ENCODE measurements at regions of chr18 and their contacts with region 1.

Region 1: DNA sequence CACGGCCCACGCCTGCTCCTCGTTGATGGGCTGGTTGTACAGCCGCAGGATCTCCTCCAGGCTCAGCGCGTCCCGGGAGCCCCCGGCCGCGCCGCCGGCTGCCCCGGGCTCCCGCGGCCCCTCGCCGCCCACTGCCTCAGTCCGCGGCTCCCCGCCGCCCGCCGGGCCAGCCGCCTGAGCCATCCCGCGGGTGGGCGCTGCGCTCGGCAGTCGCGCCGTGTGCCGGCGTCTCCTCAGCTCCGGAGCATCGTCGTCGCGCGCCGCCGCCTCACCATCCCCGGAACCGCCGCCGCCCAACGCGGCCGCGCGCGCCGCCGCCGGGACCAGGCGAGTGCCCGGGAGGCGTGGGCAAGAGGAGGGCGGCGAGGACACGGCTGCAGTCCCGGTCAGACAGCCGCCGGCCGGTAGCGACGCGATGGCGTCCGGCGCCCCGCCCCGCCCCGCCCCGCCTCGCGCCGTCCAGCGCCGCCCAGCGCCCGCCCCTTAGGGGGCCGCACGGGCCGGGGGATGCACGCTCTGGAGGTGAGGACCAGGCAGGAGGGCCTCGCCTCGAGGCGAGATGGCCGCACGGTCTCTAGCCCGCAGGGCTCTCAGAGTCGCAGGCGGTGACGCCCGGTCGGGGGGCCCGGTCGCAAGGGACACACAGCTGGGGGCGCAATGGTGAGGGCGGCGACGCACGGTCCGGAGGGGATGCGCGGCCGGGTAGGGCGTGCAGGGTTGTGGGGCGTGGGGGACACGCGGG is at the start of gene SPIRE1:
- DNase-seq: peak; percentile 86
- H3K4me3 ChIP-seq: peak within 1 kb of the TSS; percentile 72 to 92 (median 82)
- H3K27ac ChIP-seq: peak within 1 kb of the TSS; percentile 98
- H3K4me1 ChIP-seq: peaks cover 0 to 25% (median 12%) of the 10 kb centered on the region in 4 donors
- H3K27me3 ChIP-seq: no peaks in the 10 kb centered on the region
- CTCF ChIP-seq: no peak
- EP300 ChIP-seq: no peak
- POLR2A ChIP-seq: no peak
- total RNA-seq, gene SPIRE1: 22.7 to 31.6 (median 24.8) TPM

Region 2: DNA sequence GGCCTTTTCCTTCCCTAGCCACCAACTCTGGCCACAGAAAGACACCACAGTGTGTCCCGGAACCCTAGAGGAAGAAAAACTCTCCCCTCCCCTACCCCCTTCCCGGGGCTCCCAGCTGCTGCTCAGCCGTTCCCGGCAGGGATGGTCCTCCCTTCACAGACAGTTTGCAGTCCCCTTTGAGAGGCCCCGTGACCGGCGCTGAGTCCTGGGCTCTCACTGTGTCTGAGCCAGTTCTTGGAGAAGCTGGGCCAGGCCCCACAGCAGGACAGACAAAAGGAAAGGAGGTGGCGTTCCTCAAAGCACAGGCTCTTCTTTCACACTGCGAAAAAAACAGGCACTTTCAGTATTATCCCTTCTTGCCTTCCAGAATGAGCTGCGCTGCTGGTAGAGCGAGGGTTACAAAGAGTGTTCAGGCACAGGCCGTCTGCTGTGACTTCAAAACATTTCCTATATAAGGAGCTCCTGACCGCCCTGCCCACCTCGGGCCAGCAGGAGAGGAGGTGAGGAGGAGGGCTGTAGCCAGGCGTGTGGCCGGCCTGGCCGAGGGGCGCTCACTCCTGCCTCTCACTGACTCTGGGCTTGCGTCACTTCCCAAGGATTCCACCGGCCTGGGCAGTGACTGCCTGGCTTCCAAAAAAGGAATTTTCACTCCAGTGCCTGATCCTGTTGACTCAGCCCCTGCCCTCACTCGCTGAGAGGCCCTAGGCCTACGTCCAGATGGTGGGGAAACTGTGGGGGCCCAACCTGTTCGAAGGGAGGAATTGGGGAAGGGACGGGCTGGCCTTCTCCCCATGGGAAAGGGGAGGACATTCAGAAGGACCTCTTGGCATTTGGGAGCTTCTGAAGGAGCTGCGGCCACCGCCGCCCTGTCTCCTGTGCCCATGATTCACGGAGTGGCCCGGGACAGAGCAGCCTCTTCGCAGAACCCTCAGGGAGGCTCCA is 378.8 kb before region 1 on chr18:
- intact Hi-C with region 1: loop called (anchors 5 kb)
- DNase-seq: peak; percentile 98
- H3K4me3 ChIP-seq: peak overlapping the region; percentile 42 to 56 (median 50)
- H3K27ac ChIP-seq: peak overlapping the region; percentile 92 to 99 (median 96)
- H3K4me1 ChIP-seq: peaks cover 0 to 58% (median 52%) of the 10 kb centered on the region in 4 donors
- H3K27me3 ChIP-seq: no peaks in the 10 kb centered on the region
- CTCF ChIP-seq: peak in 3 of 4 experiments; percentile 7 to 20 (median 17)
- EP300 ChIP-seq: peak in 3 of 4 donors; percentile 49 to 93 (median 67)
- POLR2A ChIP-seq: peak; percentile 80 to 87

Region 3: GRCh38 chr18:12391618-12392165 is 266.2 kb before region 1 on chr18:
- intact Hi-C with region 1: loop called (anchors 1 kb)
- DNase-seq: peak; percentile 75
- H3K4me3 ChIP-seq: no peak overlapping the region
- H3K27ac ChIP-seq: no peak overlapping the region
- H3K4me1 ChIP-seq: no peaks in the 10 kb centered on the region
- H3K27me3 ChIP-seq: no peaks in the 10 kb centered on the region
- CTCF ChIP-seq: peak; percentile 71 to 95 (median 80)
- EP300 ChIP-seq: no peak
- POLR2A ChIP-seq: no peak

Region 4: GRCh38 chr18:12408247-12408869 is 249.5 kb before region 1 on chr18:
- intact Hi-C with region 1: loop called (anchors 5 kb)
- DNase-seq: no peak
- H3K4me3 ChIP-seq: peak overlapping the region; percentile 49 to 71 (median 64)
- H3K27ac ChIP-seq: peak overlapping the region; percentile 86 to 93 (median 92)
- H3K4me1 ChIP-seq: peaks cover 0 to 28% (median 16%) of the 10 kb centered on the region in 4 donors
- H3K27me3 ChIP-seq: no peaks in the 10 kb centered on the region
- CTCF ChIP-seq: no peak
- EP300 ChIP-seq: no peak
- POLR2A ChIP-seq: no peak

Region 5: GRCh38 chr18:12883684-12884405 is 226.0 kb after region 1 on chr18 and contains the start of gene PTPN2:
- intact Hi-C with region 1: loop called (anchors 5 kb)
- DNase-seq: peak; percentile 98
- H3K4me3 ChIP-seq: peak within 1 kb of the TSS; percentile 68 to 87 (median 77)
- H3K27ac ChIP-seq: peak within 1 kb of the TSS; percentile 95 to 100 (median 98)
- H3K4me1 ChIP-seq: peaks cover 0 to 26% (median 15%) of the 10 kb centered on the region in 4 donors
- H3K27me3 ChIP-seq: no peaks in the 10 kb centered on the region
- CTCF ChIP-seq: no peak
- EP300 ChIP-seq: peak in 1 of 4 donors; percentile 9
- POLR2A ChIP-seq: peak; percentile 82 to 85
- total RNA-seq, gene PTPN2: 20.0 to 31.0 (median 21.0) TPM

Region 6: GRCh38 chr18:13221869-13222855 is 564.3 kb after region 1 on chr18:
- intact Hi-C with region 1: no loop called
- DNase-seq: peak; percentile 95
- H3K4me3 ChIP-seq: peak overlapping the region in 1 of 4 donors; percentile 9
- H3K27ac ChIP-seq: peak overlapping the region; percentile 87 to 94 (median 90)
- H3K4me1 ChIP-seq: peaks cover 0 to 65% (median 59%) of the 10 kb centered on the region in 4 donors
- H3K27me3 ChIP-seq: no peaks in the 10 kb centered on the region
- CTCF ChIP-seq: no peak
- EP300 ChIP-seq: peak; percentile 71 to 87 (median 75)
- POLR2A ChIP-seq: no peak

Measured in sigmoid colon (tissue), 7 donors.